Transverse colon (tissue), 4 donors: ENCODE measurements at regions of chr1 and their contacts with region 1.

Region 1: DNA sequence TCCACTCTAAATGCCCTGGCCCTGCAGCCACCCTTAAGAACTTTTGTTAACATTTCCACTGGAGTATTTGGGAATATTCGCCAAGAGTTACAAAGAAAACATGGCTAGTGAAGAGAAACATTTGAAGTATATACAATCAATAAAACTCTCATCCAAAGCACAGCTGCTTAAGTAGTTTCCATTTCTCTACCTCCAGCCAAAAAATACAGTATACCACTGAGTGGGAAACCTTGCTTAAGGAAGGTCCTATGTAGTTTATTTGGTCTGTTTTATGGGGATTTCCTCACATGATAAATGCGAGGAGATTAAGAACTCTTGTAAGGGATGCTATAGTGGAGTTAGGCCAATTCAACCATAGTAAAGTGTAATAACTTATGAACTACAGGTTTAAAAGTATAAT is 382.5 kb downstream of the NEGR1 start:
- DNase-seq: no peak
- H3K4me3 ChIP-seq: no peak overlapping the region
- H3K27ac ChIP-seq: no peak overlapping the region
- H3K4me1 ChIP-seq: no peaks in the 10 kb centered on the region
- H3K27me3 ChIP-seq: no peaks in the 10 kb centered on the region
- CTCF ChIP-seq: no peak
- EP300 ChIP-seq: no peak
- POLR2A ChIP-seq: no peak

Region 2: GRCh38 chr1:72649991-72650390 is 750.1 kb after region 1 on chr1:
- in situ Hi-C with region 1: no loop called
- intact Hi-C with region 1: loop called (anchors 5 kb)
- DNase-seq: no peak
- H3K4me3 ChIP-seq: no peak overlapping the region
- H3K27ac ChIP-seq: no peak overlapping the region
- H3K4me1 ChIP-seq: no peaks in the 10 kb centered on the region
- H3K27me3 ChIP-seq: no peaks in the 10 kb centered on the region
- CTCF ChIP-seq: no peak
- EP300 ChIP-seq: no peak
- POLR2A ChIP-seq: no peak